ENCODE measurements at regions of chr6 and their contacts with region 1.

Region 1: DNA sequence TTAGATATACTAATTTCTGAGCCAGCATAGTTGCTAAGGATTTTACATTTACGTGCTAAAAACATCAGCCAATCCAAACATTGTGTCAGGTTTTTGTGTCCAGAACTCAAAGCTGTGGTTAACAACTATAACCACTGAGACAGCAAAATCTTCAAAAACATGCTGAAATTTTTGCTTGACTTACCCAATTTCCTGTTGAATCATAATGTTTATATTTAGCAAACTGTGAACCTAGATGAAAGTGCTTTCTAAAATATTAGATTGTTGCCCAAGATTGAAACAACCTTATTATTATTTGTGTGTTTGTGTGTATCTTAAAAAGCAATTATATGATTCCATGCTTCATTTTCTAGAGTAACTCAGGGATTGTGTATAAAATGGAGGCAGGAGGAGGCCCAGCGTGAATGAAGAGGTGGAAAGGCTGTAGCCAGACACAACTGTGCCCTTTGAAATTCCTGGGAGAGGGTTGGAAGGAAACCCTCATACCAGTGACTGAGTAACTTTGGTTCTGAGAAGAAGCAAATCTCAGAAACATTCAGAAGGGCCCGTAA is 48.0 kb downstream of the ARMC2 start:
- DNase-seq: no peak
- H3K4me3 ChIP-seq: no peak overlapping the region
- H3K27ac ChIP-seq: peak overlapping the region; percentile 78 to 82
- H3K4me1 ChIP-seq: peaks cover 9 to 30% of the 10 kb centered on the region in 2 donors
- H3K27me3 ChIP-seq: no peaks in the 10 kb centered on the region
- CTCF ChIP-seq: no peak

Region 2: DNA sequence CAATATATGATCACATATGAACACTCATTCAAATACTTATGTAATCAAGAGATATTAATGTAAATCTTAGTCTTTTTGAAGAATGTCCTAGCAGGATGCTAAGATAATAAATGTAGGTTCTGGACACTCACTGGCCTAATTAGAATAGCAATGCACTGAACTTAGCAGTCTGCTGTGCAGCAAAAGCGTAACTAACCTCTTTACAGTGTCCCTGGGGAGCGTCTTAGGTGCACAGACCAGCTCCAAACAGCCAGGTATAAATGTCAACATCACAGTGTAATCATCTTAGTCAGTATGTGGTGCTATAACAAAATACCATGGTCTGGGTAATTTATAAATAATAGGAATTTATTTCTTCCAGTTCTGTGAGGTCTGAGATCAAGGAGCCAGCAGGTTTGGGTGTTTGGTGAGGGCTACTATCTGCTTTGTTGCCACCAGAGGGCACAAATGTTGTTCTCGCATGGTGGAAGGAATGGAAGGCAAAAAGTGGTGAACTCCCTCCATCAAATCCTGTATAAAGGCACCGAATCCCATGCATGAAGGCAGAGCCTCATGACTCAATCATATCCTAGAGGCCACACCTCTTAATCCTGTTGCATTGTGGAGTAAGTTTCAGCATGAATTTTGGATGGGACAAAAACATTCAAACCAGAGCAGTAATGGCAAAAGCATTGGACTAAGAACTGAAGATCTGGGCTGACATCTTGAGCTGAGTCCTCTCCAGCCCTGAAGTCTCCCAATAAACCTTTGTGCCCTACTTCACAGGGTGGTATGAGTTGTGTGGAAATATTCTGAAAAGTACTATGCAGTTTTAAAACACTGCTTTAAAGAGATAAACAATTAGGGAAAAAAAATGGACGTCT is 377.2 kb before region 1 on chr6:
- intact Hi-C with region 1: no loop called
- DNase-seq: no peak
- H3K4me3 ChIP-seq: no peak overlapping the region
- H3K27ac ChIP-seq: no peak overlapping the region
- H3K4me1 ChIP-seq: no peaks in the 10 kb centered on the region
- H3K27me3 ChIP-seq: no peaks in the 10 kb centered on the region
- CTCF ChIP-seq: peak in 1 of 3 experiments; percentile 22

Region 3: GRCh38 chr6:108673602-108674001 is 222.6 kb before region 1 on chr6:
- intact Hi-C with region 1: no loop called
- DNase-seq: no peak
- H3K4me3 ChIP-seq: no peak overlapping the region
- H3K27ac ChIP-seq: peak overlapping the region in 1 of 2 donors; percentile 35
- H3K4me1 ChIP-seq: peaks cover 19 to 72% of the 10 kb centered on the region in 2 donors
- H3K27me3 ChIP-seq: no peaks in the 10 kb centered on the region
- CTCF ChIP-seq: no peak

Region 4: GRCh38 chr6:108782179-108783041 is 113.8 kb before region 1 on chr6:
- intact Hi-C with region 1: loop called (anchors 5 kb)
- DNase-seq: peak; percentile 56 to 90
- H3K4me3 ChIP-seq: peak overlapping the region; percentile 47 to 61
- H3K27ac ChIP-seq: peak overlapping the region in 1 of 2 donors; percentile 10
- H3K4me1 ChIP-seq: peaks cover 0 to 12% of the 10 kb centered on the region in 2 donors
- H3K27me3 ChIP-seq: no peaks in the 10 kb centered on the region
- CTCF ChIP-seq: peak; percentile 66 to 79 (median 66)

Region 5: GRCh38 chr6:108848116-108848868 is 47.9 kb before region 1 on chr6 and contains the start of gene ARMC2:
- intact Hi-C with region 1: loop called (anchors 2 kb)
- DNase-seq: peak; percentile 63 to 94
- H3K4me3 ChIP-seq: peak within 1 kb of the TSS; percentile 53 to 79
- H3K27ac ChIP-seq: peak within 1 kb of the TSS; percentile 55 to 77
- H3K4me1 ChIP-seq: peaks cover 0 to 15% of the 10 kb centered on the region in 2 donors
- H3K27me3 ChIP-seq: no peaks in the 10 kb centered on the region
- CTCF ChIP-seq: no peak
- total RNA-seq, gene ARMC2: 0.11 TPM

Region 6: DNA sequence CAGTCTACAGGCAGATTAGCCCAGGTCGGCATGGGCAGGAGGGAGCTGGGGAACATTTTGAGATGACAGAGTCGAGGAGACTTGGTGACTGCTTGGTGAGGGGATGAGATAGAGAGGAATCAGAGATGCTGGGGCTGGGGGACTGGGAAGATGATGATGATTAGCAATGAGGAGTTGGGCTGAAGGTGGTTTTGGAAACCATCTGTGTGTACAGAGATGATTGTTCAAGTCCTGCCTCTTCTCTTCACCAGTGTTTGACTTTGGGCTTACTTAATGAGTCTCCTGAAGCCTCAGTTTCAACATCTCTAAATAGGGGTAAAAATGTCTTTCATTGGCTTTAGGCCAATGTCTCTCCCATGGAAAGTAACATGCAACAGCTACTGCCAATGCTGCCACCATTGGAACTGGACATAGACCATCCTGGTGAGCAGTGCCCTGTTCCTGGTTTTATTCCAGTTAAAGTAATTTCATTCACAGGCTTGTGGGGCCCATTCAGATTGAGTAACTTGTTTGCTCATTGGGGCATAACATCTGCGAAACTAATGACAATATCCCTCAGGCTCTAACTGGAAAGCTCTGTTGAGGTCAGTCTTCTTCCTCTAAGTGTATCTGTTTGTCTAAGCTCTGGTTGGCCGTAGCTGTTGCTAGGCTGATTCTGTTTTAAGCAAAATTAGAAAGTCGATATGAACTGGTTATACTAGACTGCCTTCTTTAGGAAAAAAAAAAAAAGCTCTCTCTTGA is 51.1 kb after region 1 on chr6:
- intact Hi-C with region 1: loop called (anchors 5 kb)
- DNase-seq: no peak
- H3K4me3 ChIP-seq: no peak overlapping the region
- H3K27ac ChIP-seq: peak overlapping the region; percentile 88 to 91
- H3K4me1 ChIP-seq: peaks cover 8 to 44% of the 10 kb centered on the region in 2 donors
- H3K27me3 ChIP-seq: no peaks in the 10 kb centered on the region
- CTCF ChIP-seq: no peak

Region 7: GRCh38 chr6:109073344-109074132 is 177.4 kb after region 1 on chr6:
- intact Hi-C with region 1: loop called (anchors 5 kb)
- DNase-seq: no peak
- H3K4me3 ChIP-seq: no peak overlapping the region
- H3K27ac ChIP-seq: no peak overlapping the region
- H3K4me1 ChIP-seq: peaks cover 0 to 3% of the 10 kb centered on the region in 2 donors
- H3K27me3 ChIP-seq: no peaks in the 10 kb centered on the region
- CTCF ChIP-seq: peak; percentile 45 to 68 (median 63)